Sigmoid colon (tissue), 7 donors: ENCODE measurements at regions of chr6 and their contacts with region 1.

Region 1: GRCh38 chr6:119078376-119079282 is at the start of gene FAM184A:
- DNase-seq: peak; percentile 82
- H3K4me3 ChIP-seq: peak within 1 kb of the TSS; percentile 62 to 91 (median 74)
- H3K27ac ChIP-seq: peak within 1 kb of the TSS; percentile 77 to 91 (median 84)
- H3K4me1 ChIP-seq: peaks cover 0 to 22% (median 11%) of the 10 kb centered on the region in 4 donors
- H3K27me3 ChIP-seq: no peaks in the 10 kb centered on the region
- CTCF ChIP-seq: peak in 1 of 4 experiments; percentile 28
- EP300 ChIP-seq: no peak
- POLR2A ChIP-seq: no peak
- total RNA-seq, gene FAM184A: 3.9 to 8.7 (median 5.3) TPM

Region 2: DNA sequence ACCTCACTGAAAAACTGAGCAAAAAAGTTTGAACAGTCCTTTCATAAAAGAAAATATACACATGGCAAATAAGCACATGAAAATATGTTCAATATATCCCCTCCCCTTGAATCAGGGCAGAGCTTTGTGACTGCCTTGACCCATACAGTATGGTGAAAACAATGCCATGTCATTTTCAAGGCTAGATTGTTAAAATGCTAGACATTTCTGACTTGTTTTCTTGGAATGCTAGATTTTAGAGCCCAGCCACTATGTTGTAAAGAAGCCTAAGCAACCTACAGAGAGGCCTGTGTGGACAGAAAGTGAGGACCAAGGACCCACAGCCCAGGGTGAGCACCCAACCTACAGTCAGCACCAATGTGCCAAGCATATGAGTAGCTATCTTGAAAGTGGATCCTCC is 201.8 kb before region 1 on chr6:
- intact Hi-C with region 1: no loop called
- DNase-seq: no peak
- H3K4me3 ChIP-seq: no peak overlapping the region
- H3K27ac ChIP-seq: no peak overlapping the region
- H3K4me1 ChIP-seq: no peaks in the 10 kb centered on the region
- H3K27me3 ChIP-seq: no peaks in the 10 kb centered on the region
- CTCF ChIP-seq: no peak
- EP300 ChIP-seq: no peak
- POLR2A ChIP-seq: no peak

Region 3: GRCh38 chr6:118893807-118894424 is 184.7 kb before region 1 on chr6 and contains the start of gene ASF1A:
- intact Hi-C with region 1: loop called (anchors 2 kb)
- DNase-seq: peak; percentile 98
- H3K4me3 ChIP-seq: peak within 1 kb of the TSS; percentile 68 to 96 (median 82)
- H3K27ac ChIP-seq: peak within 1 kb of the TSS; percentile 93 to 98 (median 96)
- H3K4me1 ChIP-seq: peaks cover 0 to 38% (median 17%) of the 10 kb centered on the region in 4 donors
- H3K27me3 ChIP-seq: no peaks in the 10 kb centered on the region
- CTCF ChIP-seq: peak in 3 of 4 experiments; percentile 22 to 46 (median 33)
- EP300 ChIP-seq: no peak
- POLR2A ChIP-seq: peak; percentile 60 to 63
- total RNA-seq, gene ASF1A: 10.2 to 17.1 (median 14.1) TPM

Region 4: GRCh38 chr6:118934461-118935330 is 143.9 kb before region 1 on chr6 and contains the start of gene MCM9:
- intact Hi-C with region 1: loop called (anchors 10 kb)
- DNase-seq: peak; percentile 90
- H3K4me3 ChIP-seq: peak within 1 kb of the TSS; percentile 71 to 89 (median 78)
- H3K27ac ChIP-seq: peak within 1 kb of the TSS; percentile 93 to 97 (median 96)
- H3K4me1 ChIP-seq: peaks cover 0 to 21% (median 8%) of the 10 kb centered on the region in 4 donors
- H3K27me3 ChIP-seq: no peaks in the 10 kb centered on the region
- CTCF ChIP-seq: no peak
- EP300 ChIP-seq: no peak
- POLR2A ChIP-seq: peak in 1 of 2 donors; percentile 6
- total RNA-seq, gene MCM9: 10.2 to 16.1 (median 13.2) TPM

Region 5: GRCh38 chr6:119110601-119111548 is 32.2 kb after region 1 on chr6:
- intact Hi-C with region 1: loop called (anchors 2 kb)
- DNase-seq: no peak
- H3K4me3 ChIP-seq: no peak overlapping the region
- H3K27ac ChIP-seq: no peak overlapping the region
- H3K4me1 ChIP-seq: peaks cover 0 to 13% (median 2%) of the 10 kb centered on the region in 4 donors
- H3K27me3 ChIP-seq: no peaks in the 10 kb centered on the region
- CTCF ChIP-seq: peak; percentile 31 to 61 (median 56)
- EP300 ChIP-seq: no peak
- POLR2A ChIP-seq: no peak

Region 6: DNA sequence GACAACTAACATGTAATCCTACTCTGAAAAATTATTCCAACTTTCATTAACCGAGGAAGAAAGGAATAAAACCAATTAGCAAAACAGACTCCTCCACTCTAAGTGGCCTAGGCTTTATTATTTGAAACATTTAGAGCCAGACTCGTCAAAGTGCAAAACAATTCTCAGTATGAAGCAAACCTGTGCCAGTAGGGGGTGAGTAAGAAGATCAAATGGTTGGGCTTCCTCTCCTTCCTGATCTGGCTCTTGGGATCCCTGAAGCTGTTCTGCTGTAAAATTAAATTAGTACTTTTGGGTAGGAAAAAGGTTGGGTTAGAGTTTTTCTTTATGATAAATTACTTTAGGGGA is 448.6 kb after region 1 on chr6:
- intact Hi-C with region 1: no loop called
- DNase-seq: no peak
- H3K4me3 ChIP-seq: no peak overlapping the region
- H3K27ac ChIP-seq: peak overlapping the region in 2 of 4 donors; percentile 9 to 13
- H3K4me1 ChIP-seq: peaks cover 0 to 9% (median 4%) of the 10 kb centered on the region in 4 donors
- H3K27me3 ChIP-seq: no peaks in the 10 kb centered on the region
- CTCF ChIP-seq: no peak
- EP300 ChIP-seq: no peak
- POLR2A ChIP-seq: no peak